ENCODE measurements at regions of chr17 and their contacts with region 1.

Region 1: GRCh38 chr17:44745301-44745700 is 13.5 kb upstream of the ADAM11 start:
- DNase-seq: no peak
- H3K4me3 ChIP-seq: no peak overlapping the region
- H3K27ac ChIP-seq: no peak overlapping the region
- H3K4me1 ChIP-seq: no peaks in the 10 kb centered on the region
- CTCF ChIP-seq: 0 out of 2 replicates have a peak, but pooled peaks have one; percentile 12

Region 2: GRCh38 chr17:44607836-44608690 is 137.2 kb before region 1 on chr17:
- CTCF ChIA-PET with region 1: interaction called, 14 read pairs
- POLR2A ChIA-PET with region 1: no interaction called
- intact Hi-C with region 1: no loop called
- DNase-seq: no peak
- H3K4me3 ChIP-seq: no peak overlapping the region
- H3K27ac ChIP-seq: no peak overlapping the region
- H3K4me1 ChIP-seq: no peaks in the 10 kb centered on the region
- CTCF ChIP-seq: no peak

Measured in OCI-LY7 (cell line).